ENCODE measurements at regions of chr19 and their contacts with region 1.

Region 1: DNA sequence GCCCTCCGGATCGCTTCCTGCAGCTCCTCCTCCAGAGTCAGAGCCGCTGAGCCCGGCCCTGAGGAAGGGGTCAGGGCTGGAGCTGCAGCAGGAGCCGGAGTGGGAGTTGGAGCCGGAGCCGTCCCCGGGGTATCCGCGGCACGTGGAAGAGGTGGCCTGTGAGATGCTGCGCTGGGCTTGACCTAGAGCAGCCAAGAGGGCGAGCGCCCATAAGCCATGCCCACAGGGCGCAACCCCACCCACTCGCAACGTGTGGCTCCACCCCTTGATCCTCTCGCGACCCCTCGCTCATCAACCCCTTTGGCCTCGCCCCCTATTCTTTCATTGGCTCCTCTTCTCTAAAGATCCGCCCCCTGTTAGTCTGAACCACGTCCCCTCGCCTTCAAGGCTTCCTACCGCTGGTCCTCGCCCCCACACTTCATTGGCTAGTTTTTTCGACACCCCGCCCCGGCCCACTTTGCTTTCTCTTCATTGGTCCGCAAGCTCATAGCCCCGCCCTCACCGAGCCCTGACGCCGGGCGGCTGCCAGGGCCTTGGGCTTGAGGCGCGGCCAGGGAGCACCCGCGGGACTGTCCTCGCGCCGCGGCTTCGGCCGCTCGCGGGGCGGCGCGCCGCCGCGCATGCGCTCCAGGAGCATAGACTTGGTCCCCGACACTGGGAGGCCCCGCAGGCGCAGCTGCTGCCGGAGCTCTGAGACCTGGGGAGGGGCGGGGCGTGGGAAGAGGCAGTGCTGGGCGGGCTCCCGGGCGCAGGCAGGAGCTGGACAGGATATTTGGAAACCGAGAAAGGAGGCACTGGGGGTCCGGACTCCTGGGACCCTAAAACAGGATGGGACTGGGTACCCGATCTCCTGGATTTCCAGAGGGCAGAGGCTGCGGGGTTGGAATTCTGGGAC is 5.4 kb downstream of the MAMSTR start:
- DNase-seq: peak; percentile 100
- H3K4me3 ChIP-seq: peak overlapping the region; percentile 52 to 75 (median 62)
- H3K27ac ChIP-seq: peak overlapping the region; percentile 84 to 88 (median 86)
- H3K4me1 ChIP-seq: peaks cover 0 to 49% (median 40%) of the 10 kb centered on the region in 4 donors
- H3K27me3 ChIP-seq: no peaks in the 10 kb centered on the region
- CTCF ChIP-seq: no peak
- EP300 ChIP-seq: no peak
- POLR2A ChIP-seq: peak in 1 of 2 donors; percentile 58

Region 2: DNA sequence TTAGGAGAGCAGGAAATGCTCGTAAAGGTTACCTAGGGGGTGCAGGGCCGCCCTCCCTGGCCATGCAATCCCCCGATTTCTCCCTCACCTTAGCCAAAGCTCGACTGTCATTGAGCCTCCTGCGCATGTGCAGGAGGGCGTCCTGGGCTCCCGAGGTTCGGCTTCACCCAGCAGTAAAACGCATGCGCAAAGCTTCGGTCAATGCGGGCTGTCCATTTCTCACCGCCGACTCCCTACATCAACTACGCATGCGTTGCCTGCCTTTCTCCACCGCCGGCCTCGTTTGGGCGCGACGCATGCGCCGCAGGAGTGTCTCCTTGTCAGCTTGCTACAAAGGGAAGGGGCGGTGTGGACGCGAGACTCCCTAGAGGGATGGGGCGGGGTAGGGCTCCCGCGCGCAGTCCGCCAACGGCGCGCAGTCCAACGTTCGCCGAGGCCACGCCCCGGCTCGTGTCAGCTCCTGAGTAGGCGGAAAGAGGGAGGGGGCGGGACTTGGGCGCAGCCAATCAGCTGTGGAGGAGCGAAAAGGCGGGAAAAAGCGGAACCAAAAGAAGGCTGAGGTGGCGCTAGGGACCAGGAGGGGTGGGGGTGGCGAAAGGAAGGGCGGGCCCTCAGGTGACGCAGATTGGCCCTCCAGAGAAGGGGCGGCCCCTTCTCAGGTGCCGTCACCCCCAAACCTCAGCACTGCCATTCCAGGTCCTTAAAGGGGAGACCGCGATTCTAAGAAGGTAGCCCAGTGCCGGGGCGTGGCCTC is 350.1 kb before region 1 on chr19 and contains the starts of genes SYNGR4 and TMEM143:
- intact Hi-C with region 1: no loop called
- DNase-seq: peak; percentile 100
- H3K4me3 ChIP-seq: peak within 1 kb of the TSS; percentile 48 to 70 (median 62)
- H3K27ac ChIP-seq: peak within 1 kb of the TSS; percentile 81 to 99 (median 96)
- H3K4me1 ChIP-seq: peaks cover 0 to 12% (median 8%) of the 10 kb centered on the region in 4 donors
- H3K27me3 ChIP-seq: no peaks in the 10 kb centered on the region
- CTCF ChIP-seq: no peak
- EP300 ChIP-seq: peak in 1 of 4 donors; percentile 29
- POLR2A ChIP-seq: peak; percentile 35 to 59
- total RNA-seq, gene SYNGR4: not detected
- total RNA-seq, gene TMEM143: 5.4 to 8.9 (median 6.8) TPM

Region 3: DNA sequence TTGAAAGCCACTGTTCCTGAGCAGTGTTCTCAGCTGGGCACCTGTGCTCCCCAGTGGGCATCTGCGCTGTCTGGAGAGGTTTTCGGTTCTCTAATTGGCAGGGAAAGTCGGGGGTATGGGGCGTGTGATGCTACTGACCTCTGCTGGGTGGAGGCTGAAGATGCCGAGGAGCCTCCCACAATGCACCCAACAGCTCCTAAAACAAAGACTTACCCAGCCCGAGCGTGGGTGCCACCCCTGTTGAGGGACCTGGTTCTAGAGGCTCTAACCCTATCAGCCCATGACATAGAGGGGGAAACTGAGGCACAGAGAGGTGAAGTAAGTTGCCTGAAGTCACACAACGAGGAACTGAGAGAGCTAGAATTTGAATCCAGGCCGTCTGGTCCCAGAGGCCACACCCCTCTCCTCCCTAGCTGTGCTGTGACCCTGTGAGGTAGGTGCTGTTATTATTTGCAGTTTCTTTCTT is 105.3 kb before region 1 on chr19:
- intact Hi-C with region 1: no loop called
- DNase-seq: no peak
- H3K4me3 ChIP-seq: no peak overlapping the region
- H3K27ac ChIP-seq: no peak overlapping the region
- H3K4me1 ChIP-seq: no peaks in the 10 kb centered on the region
- H3K27me3 ChIP-seq: no peaks in the 10 kb centered on the region
- CTCF ChIP-seq: peak in 2 of 4 experiments; percentile 17 to 39
- EP300 ChIP-seq: no peak
- POLR2A ChIP-seq: no peak

Region 4: GRCh38 chr19:48674921-48675824 is 38.9 kb before region 1 on chr19:
- intact Hi-C with region 1: loop called (anchors 2 kb)
- DNase-seq: peak; percentile 92
- H3K4me3 ChIP-seq: no peak overlapping the region
- H3K27ac ChIP-seq: peak overlapping the region in 1 of 4 donors; percentile 20
- H3K4me1 ChIP-seq: peaks cover 0 to 12% (median 9%) of the 10 kb centered on the region in 4 donors
- H3K27me3 ChIP-seq: no peaks in the 10 kb centered on the region
- CTCF ChIP-seq: peak; percentile 81 to 91 (median 86)
- EP300 ChIP-seq: no peak
- POLR2A ChIP-seq: no peak

Region 5: GRCh38 chr19:48746738-48747575 is 32.8 kb after region 1 on chr19 and contains the start of gene IZUMO1:
- intact Hi-C with region 1: loop called (anchors 5 kb)
- DNase-seq: peak; percentile 84
- H3K4me3 ChIP-seq: peak within 1 kb of the TSS; percentile 16 to 47 (median 32)
- H3K27ac ChIP-seq: peak within 1 kb of the TSS; percentile 25 to 68 (median 54)
- H3K4me1 ChIP-seq: peaks cover 0 to under 1% (median under 1%) of the 10 kb centered on the region in 4 donors
- H3K27me3 ChIP-seq: peaks cover 15 to 47% (median 44%) of the 10 kb centered on the region in 3 donors
- CTCF ChIP-seq: no peak
- EP300 ChIP-seq: no peak
- POLR2A ChIP-seq: no peak
- total RNA-seq, gene IZUMO1: not detected